Prostate gland (tissue), 2 donors: ENCODE measurements at regions of chr5 and their contacts with region 1.

Region 1: DNA sequence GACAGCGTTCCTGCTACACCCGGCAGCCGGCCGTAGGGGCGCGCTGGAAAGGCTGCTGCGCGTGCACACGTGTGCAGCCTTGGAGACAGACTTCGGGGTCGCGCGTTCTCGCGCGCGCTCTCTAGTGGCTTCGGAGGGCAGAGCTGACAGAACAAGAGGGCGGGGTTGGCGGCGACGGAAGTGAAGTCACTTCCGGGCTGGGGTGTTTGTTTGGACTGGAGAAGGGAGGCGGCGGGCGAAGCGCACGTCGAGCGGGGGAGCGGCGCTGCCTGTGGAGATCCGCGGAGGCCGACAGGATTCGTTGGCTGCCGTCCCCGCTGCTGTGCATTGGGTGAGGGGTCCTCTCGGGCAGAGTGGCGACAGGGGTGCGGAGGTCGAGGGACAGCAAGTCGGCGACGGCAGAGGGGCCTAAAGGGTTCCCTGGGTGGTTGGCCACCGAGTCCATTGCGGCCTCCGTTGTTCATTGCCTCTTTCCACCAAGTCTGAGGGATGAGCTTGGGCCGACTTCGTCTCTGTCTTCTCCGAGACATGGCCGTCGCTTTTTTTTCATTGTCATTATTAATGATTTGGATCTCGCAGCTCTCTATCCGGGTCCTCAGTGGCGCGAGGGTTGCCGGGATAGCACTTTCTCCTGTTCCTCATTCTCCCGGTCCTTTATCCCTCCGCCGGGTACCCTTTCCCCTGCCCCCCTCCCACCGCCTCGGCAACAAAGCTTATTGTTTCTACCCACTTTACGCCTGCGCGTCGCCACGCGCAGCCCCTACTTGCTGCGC is at the start of gene PAIP2:
- DNase-seq: peak; percentile 96
- H3K4me3 ChIP-seq: peak within 1 kb of the TSS; percentile 73 to 91
- H3K27ac ChIP-seq: peak within 1 kb of the TSS; percentile 97 to 99
- H3K4me1 ChIP-seq: peaks cover 4% of the 10 kb centered on the region
- H3K27me3 ChIP-seq: no peaks in the 10 kb centered on the region
- CTCF ChIP-seq: peak; percentile 77 to 97 (median 87)
- POLR2A ChIP-seq: peak; percentile 96
- total RNA-seq, gene PAIP2: 105 to 119 TPM

Region 2: GRCh38 chr5:139293504-139294373 is 48.1 kb before region 1 on chr5 and contains the start of gene MATR3:
- intact Hi-C with region 1: loop called (anchors 5 kb)
- DNase-seq: peak; percentile 95
- H3K4me3 ChIP-seq: peak within 1 kb of the TSS; percentile 67 to 74
- H3K27ac ChIP-seq: peak within 1 kb of the TSS; percentile 98 to 100
- H3K4me1 ChIP-seq: peaks cover 2% of the 10 kb centered on the region
- H3K27me3 ChIP-seq: no peaks in the 10 kb centered on the region
- CTCF ChIP-seq: peak in 2 of 4 experiments; percentile 7 to 24
- POLR2A ChIP-seq: peak; percentile 96
- total RNA-seq, gene MATR3: 192 to 207 TPM